ENCODE measurements at regions of chr2 and their contacts with region 1.

Region 1: DNA sequence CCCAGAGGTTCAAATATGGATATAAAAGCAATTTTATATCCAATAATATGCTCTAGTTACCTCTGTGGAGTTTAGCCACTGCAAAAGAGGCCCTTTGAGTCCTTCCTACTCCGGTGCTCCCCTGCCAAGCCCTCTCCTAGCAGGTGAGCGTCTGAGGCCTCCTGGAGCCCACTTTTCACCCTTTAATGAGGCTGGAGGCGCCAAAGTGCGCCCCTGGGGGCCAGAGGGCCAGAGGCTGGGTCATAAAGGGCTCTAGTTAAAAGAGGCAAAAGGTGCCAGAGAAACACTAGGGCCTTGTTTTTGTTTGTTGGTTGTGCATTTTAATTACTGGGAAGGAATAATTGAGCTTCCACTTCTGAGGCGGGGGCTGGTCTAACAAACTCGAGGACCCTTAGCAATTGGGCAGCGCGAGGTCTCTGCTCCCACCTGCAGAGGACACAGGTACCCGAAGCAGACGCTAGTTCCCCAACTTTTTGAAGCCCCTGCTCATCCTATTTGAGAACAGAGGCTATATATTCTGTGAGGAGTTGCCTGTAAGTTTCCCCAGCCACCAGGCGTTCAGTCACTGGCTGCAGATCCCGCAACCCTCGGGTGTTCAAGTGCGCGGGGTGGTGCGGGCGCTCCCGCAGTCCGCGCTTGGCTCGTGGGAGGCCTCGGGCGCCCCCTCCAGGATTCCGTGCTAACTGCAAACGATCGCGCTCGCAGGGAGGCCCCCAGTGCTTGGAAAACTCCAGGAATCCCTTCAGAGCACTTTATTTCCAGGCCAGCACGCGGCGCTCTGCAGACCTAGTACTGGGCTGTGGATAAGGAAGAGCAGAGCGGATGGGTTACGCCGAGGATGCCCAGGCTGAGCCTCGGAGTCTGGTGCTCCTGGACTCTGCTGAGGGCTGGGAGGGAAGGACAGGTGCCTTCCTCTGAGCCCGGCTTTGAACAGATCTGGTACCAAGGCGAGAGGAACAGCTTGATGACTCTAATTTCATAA is 14.1 kb downstream of the MSGN1 start:
- DNase-seq: peak; percentile 58 to 65 (median 63)
- H3K4me3 ChIP-seq: peak overlapping the region in 5 of 7 experiments; percentile 23 to 60 (median 35)
- H3K27ac ChIP-seq: no peak overlapping the region
- H3K4me1 ChIP-seq: peaks cover 0 to 9% (median 6%) of the 10 kb centered on the region in 4 experiments
- H3K27me3 ChIP-seq: peaks cover 0 to 15% (median 6%) of the 10 kb centered on the region in 5 experiments

Region 2: GRCh38 chr2:17719562-17720371 is 110.6 kb before region 1 on chr2:
- CTCF ChIA-PET with region 1: interaction called, 11 read pairs
- POLR2A ChIA-PET with region 1: no interaction called
- DNase-seq: peak; percentile 12 to 41 (median 28)
- H3K4me3 ChIP-seq: no peak overlapping the region
- H3K27ac ChIP-seq: no peak overlapping the region
- H3K4me1 ChIP-seq: no peaks in the 10 kb centered on the region
- H3K27me3 ChIP-seq: no peaks in the 10 kb centered on the region

Region 3: DNA sequence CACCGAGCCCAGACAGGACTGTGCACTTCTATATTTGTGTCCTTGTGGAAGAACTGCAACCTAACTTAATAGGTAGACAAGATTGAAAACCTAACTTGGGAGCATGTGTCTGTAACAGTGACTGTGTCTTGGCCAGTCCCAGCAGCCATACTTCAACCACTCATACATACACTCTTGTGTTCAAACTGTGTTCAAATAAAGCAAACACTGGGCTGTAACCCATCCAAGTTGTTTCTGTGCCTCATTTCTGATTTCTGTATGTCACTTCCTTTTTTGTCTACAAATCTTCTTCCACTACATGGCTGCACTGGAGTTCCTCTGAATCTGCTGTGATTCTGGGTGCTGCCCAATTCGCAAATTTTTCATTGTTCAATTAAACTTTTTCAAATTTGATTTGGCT is 16.9 kb after region 1 on chr2:
- CTCF ChIA-PET with region 1: interaction called, 18 read pairs
- POLR2A ChIA-PET with region 1: no interaction called
- DNase-seq: no peak
- H3K4me3 ChIP-seq: no peak overlapping the region
- H3K27ac ChIP-seq: no peak overlapping the region
- H3K4me1 ChIP-seq: no peaks in the 10 kb centered on the region
- H3K27me3 ChIP-seq: peaks cover 0 to 10% (median 0%) of the 10 kb centered on the region in 5 experiments